Adrenal gland (tissue), 19 donors: ENCODE measurements at regions of chr1 and their contacts with region 1.

Region 1: GRCh38 chr1:27102707-27103491 is 52.0 kb downstream of the SLC9A1 start:
- DNase-seq: peak; percentile 65 to 93 (median 78)
- H3K4me3 ChIP-seq: no peak overlapping the region
- H3K27ac ChIP-seq: no peak overlapping the region
- H3K4me1 ChIP-seq: peaks cover 6 to 14% of the 10 kb centered on the region in 2 donors
- H3K27me3 ChIP-seq: no peaks in the 10 kb centered on the region
- CTCF ChIP-seq: peak; percentile 95 to 99 (median 96)
- POLR2A ChIP-seq: no peak

Region 2: GRCh38 chr1:26949926-26950319 is 153.0 kb before region 1 on chr1:
- intact Hi-C with region 1: no loop called
- DNase-seq: no peak
- H3K4me3 ChIP-seq: no peak overlapping the region
- H3K27ac ChIP-seq: peak overlapping the region in 1 of 5 donors; percentile 15
- H3K4me1 ChIP-seq: peaks cover 19 to 22% of the 10 kb centered on the region in 2 donors
- H3K27me3 ChIP-seq: no peaks in the 10 kb centered on the region
- CTCF ChIP-seq: no peak
- POLR2A ChIP-seq: no peak

Region 3: DNA sequence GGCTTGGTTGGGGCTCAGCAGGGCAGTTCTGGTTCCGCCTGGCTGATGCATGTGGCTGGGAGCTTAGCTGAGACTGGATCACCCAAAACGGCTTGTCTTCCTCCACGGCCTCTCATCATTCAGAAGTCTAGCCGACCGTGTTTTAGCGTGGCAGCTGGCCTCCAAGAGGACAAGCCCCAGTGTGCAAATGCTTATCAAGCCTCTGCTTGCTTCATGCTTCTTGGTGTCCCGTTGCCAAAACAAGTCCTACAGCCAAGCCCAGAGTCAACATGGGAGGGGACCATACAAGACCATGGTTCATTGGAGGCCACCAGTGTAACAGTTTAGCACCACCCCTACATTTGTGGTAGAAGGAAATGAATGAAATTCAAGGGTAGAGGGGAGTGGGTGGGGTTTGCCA is 132.1 kb before region 1 on chr1:
- intact Hi-C with region 1: no loop called
- DNase-seq: no peak
- H3K4me3 ChIP-seq: no peak overlapping the region
- H3K27ac ChIP-seq: no peak overlapping the region
- H3K4me1 ChIP-seq: no peaks in the 10 kb centered on the region
- H3K27me3 ChIP-seq: no peaks in the 10 kb centered on the region
- CTCF ChIP-seq: no peak
- POLR2A ChIP-seq: no peak

Region 4: GRCh38 chr1:27192039-27192529 is 89.2 kb after region 1 on chr1:
- intact Hi-C with region 1: loop called (anchors 5 to 10 kb)
- DNase-seq: peak in 6 of 7 donors; percentile 35 to 63 (median 51)
- H3K4me3 ChIP-seq: no peak overlapping the region
- H3K27ac ChIP-seq: no peak overlapping the region
- H3K4me1 ChIP-seq: peaks cover 9 to 15% of the 10 kb centered on the region in 2 donors
- H3K27me3 ChIP-seq: no peaks in the 10 kb centered on the region
- CTCF ChIP-seq: no peak
- POLR2A ChIP-seq: no peak